Cardiac septum (tissue), 1 donor: ENCODE measurements at regions of chr10 and their contacts with region 1.

Region 1: GRCh38 chr10:23314835-23315239 is 29.8 kb downstream of the C10orf67 start:
- DNase-seq: no peak

Region 2: DNA sequence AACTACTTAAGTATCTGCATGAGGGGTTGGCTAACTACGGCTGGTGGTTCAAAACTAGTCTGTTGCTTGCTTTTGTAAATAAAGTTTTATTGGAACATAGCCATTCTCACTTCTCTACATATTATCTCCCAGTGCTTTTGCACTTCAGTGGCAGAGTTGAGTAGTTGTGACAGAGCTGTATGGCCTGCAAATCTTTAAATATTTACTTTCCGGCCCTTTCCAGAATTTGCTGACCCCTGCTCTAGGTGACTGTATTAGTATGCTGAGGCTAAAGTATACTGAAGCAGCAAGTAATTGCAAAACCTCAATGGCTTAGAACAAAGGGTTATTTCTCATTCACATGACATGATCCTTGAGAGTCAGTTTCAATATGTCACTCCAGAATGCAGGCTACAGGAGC is 202.3 kb after region 1 on chr10:
- intact Hi-C with region 1: no loop called
- DNase-seq: no peak

Region 3: GRCh38 chr10:23656735-23657134 is 341.9 kb after region 1 on chr10:
- intact Hi-C with region 1: loop called (anchors 5 kb)
- DNase-seq: no peak

Region 4: DNA sequence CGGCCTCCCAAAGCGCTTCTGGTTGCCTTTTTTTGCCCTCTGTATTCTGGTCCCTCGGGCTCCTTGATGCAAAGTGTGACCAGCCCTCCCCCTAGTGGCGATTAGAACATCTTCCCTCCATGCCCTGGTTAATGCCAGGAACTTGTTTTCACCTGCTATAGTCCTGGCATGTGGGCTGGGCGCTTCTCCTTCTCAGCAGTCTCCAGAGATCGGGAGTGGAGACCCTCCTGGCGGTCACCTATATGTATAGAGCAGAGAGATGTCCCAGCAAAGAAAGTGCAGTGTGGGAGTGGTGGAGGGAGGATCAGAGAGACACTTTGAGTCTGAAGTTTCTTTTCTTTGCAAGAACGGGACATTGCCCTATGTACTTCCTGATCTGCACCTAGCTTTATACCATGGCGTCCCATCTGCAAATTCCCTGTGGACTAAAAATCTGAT is 388.2 kb after region 1 on chr10:
- intact Hi-C with region 1: loop called (anchors 10 kb)
- DNase-seq: no peak